Sigmoid colon (tissue), 7 donors: ENCODE measurements at regions of chr11 and their contacts with region 1.

Region 1: GRCh38 chr11:92224407-92225124 is at the start of gene FAT3:
- DNase-seq: peak; percentile 68
- H3K4me3 ChIP-seq: peak within 1 kb of the TSS; percentile 29 to 52 (median 48)
- H3K27ac ChIP-seq: peak within 1 kb of the TSS in 3 of 4 donors; percentile 43 to 79 (median 61)
- H3K4me1 ChIP-seq: peaks cover 0 to 39% (median 37%) of the 10 kb centered on the region in 4 donors
- H3K27me3 ChIP-seq: peaks cover 6 to 95% (median 35%) of the 10 kb centered on the region in 3 donors
- CTCF ChIP-seq: no peak
- EP300 ChIP-seq: no peak
- POLR2A ChIP-seq: no peak
- total RNA-seq, gene FAT3: 1.2 to 2.9 (median 2.0) TPM

Region 2: GRCh38 chr11:92886243-92886905 is 661.8 kb after region 1 on chr11:
- intact Hi-C with region 1: loop called (anchors 10 kb)
- DNase-seq: no peak
- H3K4me3 ChIP-seq: no peak overlapping the region
- H3K27ac ChIP-seq: no peak overlapping the region
- H3K4me1 ChIP-seq: peaks cover 0 to 4% (median 0%) of the 10 kb centered on the region in 4 donors
- H3K27me3 ChIP-seq: no peaks in the 10 kb centered on the region
- CTCF ChIP-seq: peak; percentile 21 to 54 (median 50)
- EP300 ChIP-seq: no peak
- POLR2A ChIP-seq: no peak